Activated T-helper 2 cell treated with anti-CD3 and anti-CD28 coated beads, Interferon-gamma antibody, Interleukin-2, Interleukin-4, amounts not matched to agents 10 μg/mL and 5 μg/mL and 100 μg/mL, durations not matched to agents 14 hours and 24 hours and 36 hours (primary cell): ENCODE measurements at regions of chr20 and their contacts with region 1.

Region 1: DNA sequence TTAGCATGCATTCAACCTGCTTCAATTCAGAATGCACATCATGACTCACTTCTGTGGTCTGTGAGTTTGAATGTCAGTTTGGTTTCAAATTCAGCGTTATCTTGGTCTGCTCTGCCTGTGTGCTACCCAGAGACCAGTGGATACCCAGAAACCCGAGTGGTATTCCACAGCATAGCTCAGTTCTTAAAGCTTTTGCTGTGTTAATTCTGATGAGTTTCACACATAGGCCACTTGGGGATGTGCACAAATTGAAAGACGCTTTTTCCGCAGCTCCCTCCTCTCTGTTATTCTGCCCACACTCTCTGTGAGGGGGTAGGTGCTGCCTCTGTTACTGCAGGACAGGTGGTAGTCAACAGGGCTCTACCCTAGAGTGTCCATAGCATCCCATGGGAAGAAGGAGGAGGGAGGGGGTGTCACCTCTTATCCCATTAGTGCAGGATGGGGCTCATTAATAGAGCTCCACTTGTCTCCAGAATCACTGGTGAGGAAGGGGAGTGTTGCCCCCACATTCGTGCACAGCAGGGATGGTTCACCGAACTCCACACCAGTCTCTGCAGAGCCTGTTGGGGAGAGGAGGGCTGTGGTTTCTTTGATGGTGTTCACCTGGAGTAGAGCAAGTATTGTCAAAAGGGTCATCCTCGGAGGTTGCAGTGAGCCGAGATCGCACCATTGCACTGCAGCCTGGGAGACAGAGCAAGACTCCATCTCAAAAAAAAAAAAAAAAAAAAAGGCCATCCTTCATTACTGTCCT is 29.2 kb upstream of the SDCBP2 start:
- DNase-seq: peak; percentile 56
- H3K4me3 Mint-ChIP-seq: peak overlapping the region; percentile 55
- H3K27ac Mint-ChIP-seq: peak overlapping the region; percentile 85
- H3K4me1 Mint-ChIP-seq: peaks cover 61% of the 10 kb centered on the region
- H3K27me3 Mint-ChIP-seq: no peaks in the 10 kb centered on the region

Region 2: DNA sequence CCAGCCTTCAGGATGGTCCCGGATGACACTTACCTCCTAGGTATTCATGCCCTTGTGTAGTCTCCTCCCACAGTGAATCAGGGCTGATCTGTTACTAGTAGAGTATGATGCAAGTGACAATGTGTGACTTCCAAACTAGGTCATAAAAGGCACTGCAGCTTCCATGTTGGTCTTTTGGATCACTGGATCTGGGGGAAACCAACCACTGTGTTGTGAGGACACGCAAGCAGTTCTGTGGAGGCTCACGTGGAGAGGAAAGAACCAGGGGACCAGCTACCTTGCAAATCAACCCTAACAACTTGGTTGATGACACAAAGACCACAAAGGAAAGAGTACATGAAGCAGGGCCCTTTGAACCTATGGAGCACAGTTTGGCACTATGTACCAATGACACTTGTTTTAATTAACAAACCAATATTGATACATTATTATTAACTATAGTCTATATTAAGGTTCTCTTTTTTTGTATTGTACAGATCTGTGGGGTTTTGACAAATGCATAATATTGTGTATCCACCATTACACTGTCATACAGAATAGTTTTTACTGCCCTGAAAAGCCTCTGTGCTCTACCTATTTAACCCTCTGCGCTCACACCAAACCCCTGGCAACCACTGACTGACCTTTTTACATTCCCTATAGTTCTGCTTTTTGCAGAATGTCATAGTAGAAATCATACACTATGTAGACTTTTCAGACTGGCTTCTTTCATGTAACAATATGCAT is 12.9 kb before region 1 on chr20:
- intact Hi-C with region 1: loop called (anchors 1 kb)
- DNase-seq: no peak
- H3K4me3 Mint-ChIP-seq: no peak overlapping the region
- H3K27ac Mint-ChIP-seq: no peak overlapping the region
- H3K4me1 Mint-ChIP-seq: peaks cover 33% of the 10 kb centered on the region
- H3K27me3 Mint-ChIP-seq: no peaks in the 10 kb centered on the region

Region 3: DNA sequence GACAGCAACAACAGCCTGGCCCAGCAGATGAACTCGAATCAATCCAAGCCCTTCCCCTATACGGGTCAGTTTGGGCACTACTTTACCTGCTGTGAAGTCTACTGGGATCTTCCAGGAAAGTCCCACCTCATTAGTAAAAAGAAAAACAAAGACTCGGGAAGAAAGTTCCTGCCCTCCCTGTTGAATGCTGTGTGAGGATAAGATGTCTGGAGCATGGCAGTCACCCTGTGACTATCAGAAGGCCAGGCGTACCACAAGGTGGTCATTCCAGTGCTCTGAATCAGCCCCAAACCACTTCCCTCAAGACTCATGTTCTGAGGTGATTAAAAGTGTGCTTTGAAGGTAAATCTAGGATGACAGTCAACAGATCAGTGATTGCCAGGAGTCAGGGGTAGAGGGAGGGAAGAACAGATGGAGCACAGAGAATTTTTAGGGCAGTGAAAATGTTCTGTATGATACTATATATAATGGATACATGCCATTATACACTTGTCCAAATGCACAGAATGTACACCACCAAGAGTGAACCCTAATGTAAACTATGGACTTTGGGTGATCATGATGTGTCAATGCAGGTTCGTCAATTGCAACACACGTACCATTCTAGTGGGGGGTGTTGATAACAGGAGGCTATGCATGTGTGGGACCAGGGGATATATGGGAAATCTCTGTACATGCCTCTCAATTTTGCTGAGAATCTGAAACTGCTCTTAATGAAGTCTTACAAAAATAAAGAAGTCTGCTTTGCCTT is 20.1 kb after region 1 on chr20:
- intact Hi-C with region 1: loop called (anchors 2 kb)
- DNase-seq: no peak
- H3K4me3 Mint-ChIP-seq: peak overlapping the region; percentile 27
- H3K27ac Mint-ChIP-seq: peak overlapping the region; percentile 78
- H3K4me1 Mint-ChIP-seq: peaks cover 84% of the 10 kb centered on the region
- H3K27me3 Mint-ChIP-seq: no peaks in the 10 kb centered on the region

Region 4: GRCh38 chr20:1663917-1664316 is 305.8 kb after region 1 on chr20:
- intact Hi-C with region 1: loop called (anchors 10 kb)
- DNase-seq: no peak
- H3K4me3 Mint-ChIP-seq: peak overlapping the region; percentile 11
- H3K27ac Mint-ChIP-seq: peak overlapping the region; percentile 79
- H3K4me1 Mint-ChIP-seq: peaks cover 82% of the 10 kb centered on the region
- H3K27me3 Mint-ChIP-seq: no peaks in the 10 kb centered on the region

Region 5: DNA sequence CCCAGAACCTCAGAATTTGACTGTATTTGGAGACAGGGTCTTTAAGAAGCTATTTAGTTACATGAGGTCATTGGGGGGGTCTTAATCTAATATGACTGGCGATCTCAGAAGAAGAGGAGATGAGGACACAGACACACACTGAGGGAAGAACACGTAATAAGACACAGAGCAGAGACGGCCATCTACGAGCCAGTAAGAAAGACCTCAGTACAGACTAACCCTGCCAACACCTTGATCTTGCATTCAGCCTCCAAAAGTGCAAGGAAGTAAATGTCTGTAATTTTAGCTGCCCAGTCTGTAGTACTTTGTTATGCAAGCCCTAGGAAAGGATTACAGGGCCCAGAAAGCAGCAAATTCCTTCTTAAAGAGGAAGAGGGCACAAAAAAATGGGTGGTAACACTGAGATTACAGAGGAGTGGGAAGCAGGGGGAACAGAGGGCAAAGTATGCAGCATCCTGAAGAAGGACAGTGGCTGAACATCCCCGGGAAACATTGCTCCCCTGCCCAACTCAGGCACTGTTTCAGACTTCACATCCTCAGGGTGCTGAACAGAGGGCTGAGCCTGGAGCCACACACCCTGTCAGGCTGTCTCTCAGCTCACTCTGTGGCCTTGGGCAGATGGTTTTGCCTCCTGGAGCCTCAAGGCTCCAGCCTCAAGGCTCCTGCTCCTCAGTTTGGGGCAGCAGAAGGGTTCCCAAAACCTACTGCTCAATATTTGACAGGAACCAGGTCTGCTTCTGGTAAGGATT is 327.4 kb after region 1 on chr20:
- intact Hi-C with region 1: no loop called
- DNase-seq: no peak
- H3K4me3 Mint-ChIP-seq: peak overlapping the region; percentile 69
- H3K27ac Mint-ChIP-seq: peak overlapping the region; percentile 66
- H3K4me1 Mint-ChIP-seq: peaks cover 50% of the 10 kb centered on the region
- H3K27me3 Mint-ChIP-seq: no peaks in the 10 kb centered on the region